GM12878 (cell line): ENCODE measurements at regions of chr1 and their contacts with region 1.

Region 1: DNA sequence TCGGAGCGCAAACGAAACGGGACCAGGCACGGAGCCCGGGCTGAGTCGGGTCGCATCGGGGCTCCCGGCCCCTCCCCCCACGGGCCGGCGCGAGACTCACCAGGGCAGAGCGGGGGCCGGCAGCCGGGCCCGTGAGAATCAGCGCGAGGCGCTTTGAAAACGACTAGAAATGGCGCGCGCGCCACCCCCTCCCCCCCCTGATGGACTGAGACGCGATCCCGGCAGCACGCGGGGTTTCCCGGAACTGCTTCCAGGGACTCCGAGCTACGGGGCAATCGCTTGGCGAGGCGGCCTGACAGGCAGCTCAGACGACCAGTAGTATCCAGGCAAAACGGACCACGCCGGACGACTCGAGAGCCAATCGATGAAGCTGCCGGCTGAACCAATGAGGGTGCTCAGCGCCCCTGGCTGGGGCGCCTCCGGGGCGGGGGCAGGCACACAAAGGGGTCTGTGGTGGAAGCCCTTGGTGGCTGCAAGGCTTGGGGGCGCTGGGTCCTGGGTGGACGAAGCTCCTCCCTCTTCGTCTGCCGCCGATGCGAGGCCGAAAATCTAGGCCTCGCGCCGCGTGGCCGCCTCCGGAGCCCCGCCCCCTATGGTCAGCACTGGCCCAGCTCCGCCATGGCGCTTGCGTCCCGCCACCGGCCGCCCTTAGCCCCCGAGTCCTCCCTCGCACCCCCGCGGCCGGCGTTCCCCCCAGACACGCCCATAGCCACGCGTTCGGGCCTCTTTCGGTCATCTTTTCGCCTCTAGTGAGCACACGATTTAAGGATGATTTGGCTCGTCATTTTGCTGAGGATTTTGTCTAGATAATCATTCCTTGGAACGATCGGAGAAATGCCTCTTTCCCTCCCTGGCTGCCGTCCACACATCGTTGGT is at the start of gene HNRNPR:
- DNase-seq: peak; percentile 98
- ATAC-seq: peak; percentile 96
- H3K4me3 ChIP-seq: peak within 1 kb of the TSS; percentile 84
- H3K27ac ChIP-seq: peak within 1 kb of the TSS; percentile 92
- H3K4me1 ChIP-seq: peaks cover 3% of the 10 kb centered on the region; the same call in 1 of the 2 replicates
- H3K27me3 ChIP-seq: no peaks in the 10 kb centered on the region
- CTCF ChIP-seq: 0 out of 6 replicates have a peak, but pooled peaks of 1 of the 3 experiments have one; percentile 5
- EP300 ChIP-seq: no peak
- POLR2A ChIP-seq: peak; percentile 91
- RAD21 ChIP-seq: no peak
- polyA plus RNA-seq, gene HNRNPR: 80.5 to 138 TPM

Region 2: GRCh38 chr1:23367791-23368561 is 23.6 kb after region 1 on chr1:
- CTCF ChIA-PET with region 1: interaction called, 23 read pairs
- POLR2A ChIA-PET with region 1: interaction called, 68 read pairs
- RAD21 ChIA-PET with region 1: interaction called, 34 read pairs
- SMC1A ChIA-PET with region 1: interaction called, 17 read pairs
- in situ Hi-C with region 1: no loop called
- intact Hi-C with region 1: loop called (anchors 1 kb)
- DNase-seq: peak; percentile 97
- ATAC-seq: peak; percentile 97
- H3K4me3 ChIP-seq: peak overlapping the region; percentile 89
- H3K27ac ChIP-seq: peak overlapping the region; percentile 74
- H3K4me1 ChIP-seq: no peaks in the 10 kb centered on the region
- H3K27me3 ChIP-seq: no peaks in the 10 kb centered on the region
- CTCF ChIP-seq: no peak
- EP300 ChIP-seq: no peak
- POLR2A ChIP-seq: peak; percentile 90
- RAD21 ChIP-seq: no peak

Region 3: DNA sequence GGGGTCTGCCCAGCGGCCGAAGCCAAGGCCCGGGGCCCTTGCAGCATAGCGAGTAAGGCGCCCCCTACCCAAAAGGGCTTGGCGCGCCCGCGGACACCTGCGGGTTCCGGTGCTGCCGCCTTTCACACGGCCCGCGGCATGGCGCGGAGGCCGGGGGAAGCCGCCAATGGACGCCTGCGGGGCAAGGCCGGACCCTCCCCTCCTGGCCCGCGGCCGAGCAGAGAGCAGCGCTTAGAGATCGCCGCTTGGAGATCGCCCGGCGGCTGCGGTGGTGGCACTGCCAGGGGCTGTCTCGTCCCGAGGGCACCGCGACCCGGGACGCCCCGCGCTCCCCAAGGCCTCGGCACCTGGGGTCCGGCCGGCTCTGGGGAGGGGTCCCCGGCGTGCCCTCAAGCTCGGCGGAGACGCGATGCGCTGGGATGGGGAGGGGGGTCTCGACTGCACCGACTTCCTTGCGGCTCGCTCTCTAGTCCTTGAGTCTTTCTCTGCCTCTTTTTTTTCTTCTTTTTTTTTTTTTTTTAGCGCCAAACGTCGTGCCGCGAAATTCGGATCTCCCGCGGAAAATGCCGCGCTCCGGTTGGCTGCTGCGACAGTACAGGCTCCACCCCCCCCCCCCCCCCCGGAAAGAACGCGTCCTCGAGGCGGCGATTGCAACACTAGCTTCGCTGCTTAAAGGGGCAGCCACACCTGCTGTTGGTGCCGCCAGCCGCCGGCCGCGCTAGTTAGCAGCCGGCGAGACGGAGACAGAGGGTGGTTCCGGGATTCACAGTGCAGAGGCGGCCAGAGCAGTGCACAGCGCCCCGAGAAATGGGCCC is 186.6 kb after region 1 on chr1 and contains the start of gene E2F2:
- CTCF ChIA-PET with region 1: interaction called, 4 read pairs
- POLR2A ChIA-PET with region 1: interaction called, 5 read pairs
- RAD21 ChIA-PET with region 1: interaction called, 6 read pairs
- SMC1A ChIA-PET with region 1: no interaction called
- in situ Hi-C with region 1: no loop called
- intact Hi-C with region 1: loop called (anchors 5 kb)
- DNase-seq: no peak
- ATAC-seq: peak; percentile 72
- H3K4me3 ChIP-seq: peak within 1 kb of the TSS; percentile 85
- H3K27ac ChIP-seq: peak within 1 kb of the TSS; percentile 89
- H3K4me1 ChIP-seq: peaks cover 64% of the 10 kb centered on the region
- H3K27me3 ChIP-seq: no peaks in the 10 kb centered on the region
- CTCF ChIP-seq: peak in 2 of 3 experiments; percentile 23 to 29; a peak in 3 of 6 replicates
- EP300 ChIP-seq: no peak
- POLR2A ChIP-seq: peak; percentile 66
- RAD21 ChIP-seq: no peak
- polyA plus RNA-seq, gene E2F2: 4.3 to 4.6 TPM